Activated naive CD4-positive, alpha-beta T cell treated with anti-CD3 and anti-CD28 coated beads for 36 hours (primary cell): ENCODE measurements at regions of chr11 and their contacts with region 1.

Region 1: DNA sequence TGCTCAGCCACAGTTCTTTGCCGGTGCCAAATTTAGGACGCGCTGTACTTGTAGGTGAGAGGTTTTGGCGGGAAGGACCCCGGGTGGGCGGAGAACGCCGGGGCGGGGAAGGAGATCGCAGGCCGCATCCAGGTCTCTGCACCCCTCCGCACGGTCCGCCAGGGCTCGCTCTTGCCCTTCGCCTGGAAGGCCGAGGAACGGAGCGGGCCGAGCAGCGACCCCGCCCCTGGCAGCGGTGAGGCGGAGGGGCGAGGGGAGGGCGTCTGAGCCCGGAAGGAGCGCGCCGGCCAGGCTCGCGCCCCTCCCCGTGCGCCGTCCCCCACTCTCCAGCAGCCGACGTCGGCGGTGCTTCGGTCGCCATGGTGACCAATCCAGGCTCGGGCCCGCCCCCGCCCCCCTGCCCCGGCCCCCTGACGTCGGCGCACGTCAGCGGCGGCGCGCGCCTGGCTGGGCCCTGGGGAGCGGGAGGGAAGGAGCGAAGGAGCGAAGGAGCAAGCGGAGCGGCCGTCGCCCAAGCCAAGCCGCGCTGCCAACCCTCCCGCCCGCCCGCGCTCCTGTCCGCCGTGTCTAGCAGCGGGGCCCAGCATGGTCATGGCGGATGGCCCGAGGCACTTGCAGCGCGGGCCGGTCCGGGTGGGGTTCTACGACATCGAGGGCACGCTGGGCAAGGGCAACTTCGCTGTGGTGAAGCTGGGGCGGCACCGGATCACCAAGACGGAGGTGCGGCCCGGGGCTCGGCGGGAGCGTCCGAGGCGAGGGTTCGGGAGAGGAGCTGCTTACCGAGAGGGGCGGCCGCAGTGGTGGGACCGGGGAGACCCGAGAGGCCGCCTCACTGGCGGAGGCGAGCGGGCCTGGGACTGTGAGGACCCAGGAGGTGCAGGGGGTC is at the start of gene SIK2:
- DNase-seq: peak; percentile 91
- H3K4me3 Mint-ChIP-seq: peak within 1 kb of the TSS; percentile 78
- H3K27ac Mint-ChIP-seq: peak within 1 kb of the TSS; percentile 83
- H3K4me1 Mint-ChIP-seq: peaks cover 24% of the 10 kb centered on the region
- H3K27me3 Mint-ChIP-seq: no peaks in the 10 kb centered on the region
- total RNA-seq, gene SIK2: 3.5 to 3.8 TPM

Region 2: DNA sequence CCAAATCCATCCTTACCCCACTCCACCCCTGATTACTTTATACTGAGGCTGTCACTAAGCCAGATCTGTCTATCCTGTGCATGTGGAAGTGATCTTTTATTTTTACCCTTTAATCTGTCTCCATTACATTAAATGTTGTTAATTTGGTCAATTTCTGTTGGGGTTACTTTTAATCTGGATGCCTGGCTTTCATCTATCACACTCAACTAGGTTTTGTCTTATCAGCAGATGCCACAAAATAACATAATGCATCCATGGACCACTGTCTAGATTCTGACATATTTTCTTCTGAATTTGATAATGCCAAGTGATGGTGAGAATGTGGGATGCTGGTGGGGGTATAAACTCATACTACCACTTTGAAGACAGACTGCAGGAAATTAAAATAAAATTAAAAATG is 1064.1 kb before region 1 on chr11:
- CTCF ChIA-PET with region 1: no interaction called
- intact Hi-C with region 1: no loop called
- DNase-seq: no peak
- H3K4me3 Mint-ChIP-seq: no peak overlapping the region
- H3K27ac Mint-ChIP-seq: no peak overlapping the region
- H3K4me1 Mint-ChIP-seq: no peaks in the 10 kb centered on the region
- H3K27me3 Mint-ChIP-seq: peaks cover 4% of the 10 kb centered on the region

Region 3: GRCh38 chr11:111378861-111379601 is 223.2 kb before region 1 on chr11 and contains the start of gene POU2AF1:
- CTCF ChIA-PET with region 1: no interaction called
- intact Hi-C with region 1: loop called (anchors 5 kb)
- DNase-seq: peak; percentile 81
- H3K4me3 Mint-ChIP-seq: peak within 1 kb of the TSS; percentile 71
- H3K27ac Mint-ChIP-seq: peak within 1 kb of the TSS; percentile 86
- H3K4me1 Mint-ChIP-seq: peaks cover 58% of the 10 kb centered on the region
- H3K27me3 Mint-ChIP-seq: no peaks in the 10 kb centered on the region
- total RNA-seq, gene POU2AF1: 0.48 to 0.62 TPM

Region 4: GRCh38 chr11:111565114-111565720 is 37.0 kb before region 1 on chr11:
- CTCF ChIA-PET with region 1: interaction called, 6 read pairs
- intact Hi-C with region 1: loop called (anchors 1 kb)
- DNase-seq: peak; percentile 83
- H3K4me3 Mint-ChIP-seq: no peak overlapping the region
- H3K27ac Mint-ChIP-seq: no peak overlapping the region
- H3K4me1 Mint-ChIP-seq: no peaks in the 10 kb centered on the region
- H3K27me3 Mint-ChIP-seq: peaks cover 2% of the 10 kb centered on the region

Region 5: GRCh38 chr11:111777094-111778046 is 175.1 kb after region 1 on chr11:
- CTCF ChIA-PET with region 1: interaction called, 19 read pairs
- intact Hi-C with region 1: loop called (anchors 1 kb)
- DNase-seq: peak; percentile 35
- H3K4me3 Mint-ChIP-seq: no peak overlapping the region
- H3K27ac Mint-ChIP-seq: no peak overlapping the region
- H3K4me1 Mint-ChIP-seq: no peaks in the 10 kb centered on the region
- H3K27me3 Mint-ChIP-seq: no peaks in the 10 kb centered on the region

Region 6: GRCh38 chr11:111878849-111879636 is 276.8 kb after region 1 on chr11 and contains the starts of genes CFAP68 and FDXACB1:
- CTCF ChIA-PET with region 1: no interaction called
- intact Hi-C with region 1: loop called (anchors 1 kb)
- DNase-seq: peak; percentile 97
- H3K4me3 Mint-ChIP-seq: peak within 1 kb of the TSS; percentile 98
- H3K27ac Mint-ChIP-seq: peak within 1 kb of the TSS; percentile 97
- H3K4me1 Mint-ChIP-seq: peaks cover 39% of the 10 kb centered on the region
- H3K27me3 Mint-ChIP-seq: no peaks in the 10 kb centered on the region
- total RNA-seq, gene CFAP68: 31.5 to 33.2 TPM
- total RNA-seq, gene FDXACB1: 3.4 to 3.8 TPM

Region 7: GRCh38 chr11:112024773-112025678 is 422.8 kb after region 1 on chr11 and contains the start of gene DLAT:
- CTCF ChIA-PET with region 1: no interaction called
- intact Hi-C with region 1: loop called (anchors 10 kb)
- DNase-seq: peak; percentile 89
- H3K4me3 Mint-ChIP-seq: peak within 1 kb of the TSS; percentile 100
- H3K27ac Mint-ChIP-seq: peak within 1 kb of the TSS; percentile 100
- H3K4me1 Mint-ChIP-seq: peaks cover 28% of the 10 kb centered on the region
- H3K27me3 Mint-ChIP-seq: no peaks in the 10 kb centered on the region
- total RNA-seq, gene DLAT: 34.2 to 36.8 TPM